ENCODE measurements at regions of chr10 and their contacts with region 1.

Region 1: GRCh38 chr10:25016376-25017154 is at the start of gene THNSL1:
- DNase-seq: peak; percentile 90 to 99 (median 96)
- ATAC-seq: peak; percentile 97
- H3K4me3 ChIP-seq: peak within 1 kb of the TSS; percentile 76
- H3K4me3 Mint-ChIP-seq: peak within 1 kb of the TSS; percentile 87 to 98 (median 90)
- H3K27ac ChIP-seq: peak within 1 kb of the TSS; percentile 82
- H3K27ac Mint-ChIP-seq: peak within 1 kb of the TSS; percentile 91 to 99 (median 94)
- H3K4me1 ChIP-seq: peaks cover 0 to 8% of the 10 kb centered on the region in 2 donors
- H3K4me1 Mint-ChIP-seq: peaks cover 11 to 43% (median 32%) of the 10 kb centered on the region in 7 donors
- H3K27me3 ChIP-seq: no peaks in the 10 kb centered on the region
- H3K27me3 Mint-ChIP-seq: peaks cover 0 to 10% (median 0%) of the 10 kb centered on the region in 5 donors
- total RNA-seq, gene THNSL1: 1.4 to 10.6 (median 2.5) TPM

Region 2: GRCh38 chr10:24012249-24012803 is 1004.2 kb before region 1 on chr10:
- CTCF ChIA-PET with region 1: no interaction called
- POLR2A ChIA-PET with region 1: no interaction called
- intact Hi-C with region 1: no loop called
- DNase-seq: no peak
- ATAC-seq: no peak
- H3K4me3 ChIP-seq: no peak overlapping the region
- H3K4me3 Mint-ChIP-seq: no peak overlapping the region
- H3K27ac ChIP-seq: no peak overlapping the region
- H3K27ac Mint-ChIP-seq: no peak overlapping the region
- H3K4me1 ChIP-seq: no peaks in the 10 kb centered on the region
- H3K4me1 Mint-ChIP-seq: no peaks in the 10 kb centered on the region
- H3K27me3 ChIP-seq: no peaks in the 10 kb centered on the region
- H3K27me3 Mint-ChIP-seq: peaks cover 0 to 24% (median 9%) of the 10 kb centered on the region in 5 donors

Region 3: GRCh38 chr10:24449321-24449740 is 567.2 kb before region 1 on chr10:
- CTCF ChIA-PET with region 1: no interaction called
- POLR2A ChIA-PET with region 1: no interaction called
- intact Hi-C with region 1: loop called in 1 of 2 experiments (anchors 5 kb)
- DNase-seq: no peak
- ATAC-seq: no peak
- H3K4me3 ChIP-seq: no peak overlapping the region
- H3K4me3 Mint-ChIP-seq: peak overlapping the region in 1 of 10 donors; percentile 10
- H3K27ac ChIP-seq: no peak overlapping the region
- H3K27ac Mint-ChIP-seq: peak overlapping the region in 1 of 9 donors; percentile 35
- H3K4me1 ChIP-seq: peaks cover 3 to 7% of the 10 kb centered on the region in 2 donors
- H3K4me1 Mint-ChIP-seq: peaks cover 7 to 21% (median 9%) of the 10 kb centered on the region in 7 donors
- H3K27me3 ChIP-seq: peaks cover 0 to 3% of the 10 kb centered on the region in 2 donors
- H3K27me3 Mint-ChIP-seq: peaks cover 18 to 44% (median 25%) of the 10 kb centered on the region in 5 donors

Region 4: GRCh38 chr10:24642622-24643417 is 373.7 kb before region 1 on chr10:
- CTCF ChIA-PET with region 1: interaction called, 5 read pairs
- POLR2A ChIA-PET with region 1: no interaction called
- intact Hi-C with region 1: loop called (anchors 1 to 2 kb)
- DNase-seq: peak in 7 of 9 donors; percentile 24 to 64 (median 58)
- ATAC-seq: peak; percentile 93
- H3K4me3 ChIP-seq: no peak overlapping the region
- H3K4me3 Mint-ChIP-seq: no peak overlapping the region
- H3K27ac ChIP-seq: no peak overlapping the region
- H3K27ac Mint-ChIP-seq: no peak overlapping the region
- H3K4me1 ChIP-seq: no peaks in the 10 kb centered on the region
- H3K4me1 Mint-ChIP-seq: peaks cover 0 to 2% (median 0%) of the 10 kb centered on the region in 7 donors
- H3K27me3 ChIP-seq: no peaks in the 10 kb centered on the region
- H3K27me3 Mint-ChIP-seq: no peaks in the 10 kb centered on the region

Region 5: GRCh38 chr10:24887855-24888231 is 128.7 kb before region 1 on chr10:
- CTCF ChIA-PET with region 1: no interaction called
- POLR2A ChIA-PET with region 1: no interaction called
- intact Hi-C with region 1: loop called in 1 of 2 experiments (anchors 1 kb)
- DNase-seq: no peak
- ATAC-seq: peak; percentile 7
- H3K4me3 ChIP-seq: peak overlapping the region; percentile 30
- H3K4me3 Mint-ChIP-seq: peak overlapping the region; percentile 56 to 77 (median 72)
- H3K27ac ChIP-seq: peak overlapping the region; percentile 27
- H3K27ac Mint-ChIP-seq: peak overlapping the region; percentile 83 to 95 (median 86)
- H3K4me1 ChIP-seq: peaks cover 16 to 45% of the 10 kb centered on the region in 2 donors
- H3K4me1 Mint-ChIP-seq: peaks cover 35 to 71% (median 63%) of the 10 kb centered on the region in 7 donors
- H3K27me3 ChIP-seq: no peaks in the 10 kb centered on the region
- H3K27me3 Mint-ChIP-seq: no peaks in the 10 kb centered on the region

Region 6: DNA sequence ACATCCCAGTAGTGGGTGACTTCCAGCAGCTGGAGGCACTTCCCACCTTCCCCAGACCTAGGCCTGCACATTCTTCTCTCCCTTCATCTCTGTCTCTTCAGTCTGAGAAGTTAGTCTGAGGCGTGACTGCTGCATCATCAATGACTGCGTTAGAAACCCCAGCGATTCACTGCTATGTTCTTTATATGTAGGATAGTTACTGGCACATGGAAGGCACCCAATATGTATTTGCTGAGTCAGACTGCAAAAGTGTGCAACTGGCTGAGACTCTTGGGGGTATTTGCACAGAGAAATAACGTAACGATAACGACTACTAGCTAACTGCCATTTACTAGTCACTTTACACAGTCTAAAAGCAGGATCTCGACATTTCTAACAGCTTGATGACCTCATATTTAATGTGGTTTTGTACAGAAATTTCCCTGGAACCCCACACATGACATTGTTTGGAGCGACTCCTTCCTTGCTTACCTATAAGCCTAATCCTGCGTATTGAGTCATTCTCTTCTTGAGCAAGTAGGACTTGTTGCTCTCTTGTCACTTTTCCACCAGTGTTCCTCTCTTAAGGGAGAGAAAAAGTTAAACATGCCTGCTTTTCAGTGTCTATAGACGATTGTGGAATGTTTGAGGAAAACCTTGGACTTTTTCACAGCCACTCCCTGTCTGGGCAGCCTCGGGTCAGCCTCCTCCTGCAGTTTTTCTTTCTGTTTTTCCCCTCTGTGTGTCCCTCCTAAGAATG is 45.3 kb after region 1 on chr10:
- CTCF ChIA-PET with region 1: no interaction called
- POLR2A ChIA-PET with region 1: no interaction called
- intact Hi-C with region 1: loop called in 1 of 2 experiments (anchors 1 kb)
- DNase-seq: no peak
- ATAC-seq: no peak
- H3K4me3 ChIP-seq: no peak overlapping the region
- H3K4me3 Mint-ChIP-seq: peak overlapping the region in 3 of 10 donors; percentile 3 to 60 (median 25)
- H3K27ac ChIP-seq: no peak overlapping the region
- H3K27ac Mint-ChIP-seq: peak overlapping the region in 6 of 9 donors; percentile 37 to 93 (median 69)
- H3K4me1 ChIP-seq: no peaks in the 10 kb centered on the region
- H3K4me1 Mint-ChIP-seq: peaks cover 5 to 43% (median 9%) of the 10 kb centered on the region in 7 donors
- H3K27me3 ChIP-seq: no peaks in the 10 kb centered on the region
- H3K27me3 Mint-ChIP-seq: peaks cover 0 to 12% (median 0%) of the 10 kb centered on the region in 5 donors

Region 7: GRCh38 chr10:25875556-25876165 is 859.1 kb after region 1 on chr10:
- CTCF ChIA-PET with region 1: no interaction called
- POLR2A ChIA-PET with region 1: no interaction called
- intact Hi-C with region 1: no loop called
- DNase-seq: peak; percentile 22 to 65 (median 48)
- ATAC-seq: peak; percentile 76
- H3K4me3 ChIP-seq: no peak overlapping the region
- H3K4me3 Mint-ChIP-seq: no peak overlapping the region
- H3K27ac ChIP-seq: no peak overlapping the region
- H3K27ac Mint-ChIP-seq: no peak overlapping the region
- H3K4me1 ChIP-seq: no peaks in the 10 kb centered on the region
- H3K4me1 Mint-ChIP-seq: no peaks in the 10 kb centered on the region
- H3K27me3 ChIP-seq: no peaks in the 10 kb centered on the region
- H3K27me3 Mint-ChIP-seq: peaks cover 0 to 11% (median 7%) of the 10 kb centered on the region in 5 donors

Measured in naive thymus-derived CD4-positive, alpha-beta T cell (primary cell).